ENCODE measurements at regions of chr2 and their contacts with region 1.

Region 1: GRCh38 chr2:238302751-238303150 is 14.3 kb upstream of the PER2 start:
- DNase-seq: no peak
- H3K4me3 ChIP-seq: no peak overlapping the region
- H3K27ac ChIP-seq: no peak overlapping the region
- H3K4me1 ChIP-seq: no peaks in the 10 kb centered on the region
- H3K27me3 ChIP-seq: no peaks in the 10 kb centered on the region
- CTCF ChIP-seq: no peak

Region 2: DNA sequence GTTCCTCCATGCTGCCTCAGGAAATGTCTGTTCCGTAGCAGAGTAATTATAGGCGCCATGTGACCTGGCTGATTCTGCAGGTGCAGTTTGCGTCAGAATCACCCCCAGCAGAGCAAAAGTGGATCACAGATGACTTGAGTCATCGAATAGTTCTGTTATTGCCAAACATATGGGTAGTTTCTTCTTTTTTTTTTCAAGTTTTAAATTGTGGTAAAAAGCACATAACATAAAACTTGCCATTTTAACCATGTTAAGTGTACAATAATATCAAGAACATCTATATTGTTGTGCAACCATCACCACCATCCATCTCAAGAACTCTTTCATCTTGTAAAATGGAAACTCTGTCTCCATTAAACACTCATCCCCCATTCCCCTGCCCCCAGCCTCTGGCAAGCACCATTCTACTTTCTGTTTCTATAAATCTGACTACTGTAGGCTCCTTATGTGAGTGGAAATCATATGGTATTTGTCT is 367.4 kb after region 1 on chr2:
- CTCF ChIA-PET with region 1: no interaction called
- POLR2A ChIA-PET with region 1: interaction called, 12 read pairs
- intact Hi-C with region 1: no loop called
- DNase-seq: no peak
- H3K4me3 ChIP-seq: no peak overlapping the region
- H3K27ac ChIP-seq: no peak overlapping the region
- H3K4me1 ChIP-seq: no peaks in the 10 kb centered on the region
- H3K27me3 ChIP-seq: peaks cover 18% of the 10 kb centered on the region
- CTCF ChIP-seq: no peak

Measured in A673 (cell line).